ENCODE measurements at regions of chr1 and their contacts with region 1.

Region 1: DNA sequence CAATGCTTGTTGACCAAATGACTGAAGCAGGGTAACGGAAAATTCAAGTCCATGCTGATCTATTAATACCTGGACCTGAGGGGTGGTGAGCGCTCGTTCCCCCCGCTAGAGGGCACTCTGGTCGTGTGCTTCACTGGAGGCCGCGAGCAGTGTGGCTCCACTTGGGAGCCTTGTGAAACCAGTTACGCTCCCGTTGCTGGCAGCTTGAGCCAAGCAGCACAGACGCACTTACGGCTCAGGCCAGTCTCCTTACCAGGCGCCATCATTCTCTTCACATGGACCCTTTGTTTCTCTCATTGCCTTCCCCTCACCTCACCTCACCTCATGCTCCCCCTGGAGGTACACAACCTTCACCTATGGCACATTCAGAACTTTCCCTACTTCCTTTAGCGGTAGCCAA is 49.7 kb upstream of the TSPAN2 start:
- DNase-seq: peak; percentile 85 to 87
- H3K4me3 ChIP-seq: no peak overlapping the region
- H3K27ac ChIP-seq: peak overlapping the region in 1 of 2 donors; percentile 12
- H3K4me1 ChIP-seq: no peaks in the 10 kb centered on the region
- H3K27me3 ChIP-seq: no peaks in the 10 kb centered on the region
- CTCF ChIP-seq: peak; percentile 86 to 92 (median 91)
- POLR2A ChIP-seq: no peak

Region 2: DNA sequence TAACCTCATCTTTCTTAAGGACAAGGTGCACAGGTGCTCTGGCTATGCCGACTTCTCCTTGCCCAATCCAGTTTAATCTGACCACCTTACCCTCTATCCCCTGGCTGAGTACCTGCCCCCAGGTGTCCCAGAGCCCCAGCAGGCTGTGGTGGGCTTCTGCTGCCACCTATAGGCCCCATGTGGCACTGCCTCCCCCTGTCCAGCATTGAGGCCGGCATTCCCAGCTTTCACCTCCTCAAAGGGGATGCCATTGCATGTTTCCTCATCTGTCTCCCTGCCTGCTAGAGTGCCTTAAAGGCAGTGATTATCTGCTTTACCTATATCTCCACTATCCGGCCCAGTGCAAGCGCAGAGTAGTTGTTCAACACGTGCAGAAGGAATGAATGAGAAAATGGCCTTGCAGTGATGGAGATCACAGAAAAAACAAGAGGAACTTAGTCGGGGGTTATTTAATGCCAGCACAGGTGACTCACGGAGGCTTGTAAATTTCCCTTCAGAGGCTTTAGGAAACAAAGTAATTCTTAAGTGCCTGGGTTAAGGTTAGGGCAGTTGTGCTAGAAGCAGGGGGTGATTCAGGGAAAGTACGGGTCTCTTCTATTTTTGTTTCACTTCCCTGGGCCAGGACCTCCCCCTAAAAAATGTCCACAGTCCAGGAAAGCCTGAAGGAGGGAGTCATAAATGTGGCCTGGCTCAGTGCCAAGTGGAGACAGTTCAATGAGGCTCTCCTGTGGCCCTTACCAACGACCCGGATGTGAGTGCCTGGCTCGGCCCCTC is 330.9 kb after region 1 on chr1:
- intact Hi-C with region 1: loop called (anchors 10 kb)
- DNase-seq: no peak
- H3K4me3 ChIP-seq: no peak overlapping the region
- H3K27ac ChIP-seq: no peak overlapping the region
- H3K4me1 ChIP-seq: no peaks in the 10 kb centered on the region
- H3K27me3 ChIP-seq: no peaks in the 10 kb centered on the region
- CTCF ChIP-seq: peak; percentile 43 to 72 (median 64)
- POLR2A ChIP-seq: no peak

Region 3: GRCh38 chr1:115595279-115596079 is 456.5 kb after region 1 on chr1:
- intact Hi-C with region 1: loop called (anchors 10 kb)
- DNase-seq: peak; percentile 75 to 83
- H3K4me3 ChIP-seq: no peak overlapping the region
- H3K27ac ChIP-seq: no peak overlapping the region
- H3K4me1 ChIP-seq: no peaks in the 10 kb centered on the region
- H3K27me3 ChIP-seq: no peaks in the 10 kb centered on the region
- CTCF ChIP-seq: peak; percentile 40 to 89 (median 83)
- POLR2A ChIP-seq: no peak